ENCODE measurements at regions of chr7 and their contacts with region 1.

Region 1: GRCh38 chr7:108525985-108526767 is at the start of gene PNPLA8:
- DNase-seq: peak; percentile 100
- ATAC-seq: peak; percentile 91
- H3K4me3 Mint-ChIP-seq: peak within 1 kb of the TSS; percentile 95
- H3K27ac Mint-ChIP-seq: peak within 1 kb of the TSS; percentile 98
- H3K4me1 Mint-ChIP-seq: peaks cover 20% of the 10 kb centered on the region
- H3K27me3 Mint-ChIP-seq: peaks cover 3% of the 10 kb centered on the region
- total RNA-seq, gene PNPLA8: 13.0 to 13.6 TPM

Region 2: DNA sequence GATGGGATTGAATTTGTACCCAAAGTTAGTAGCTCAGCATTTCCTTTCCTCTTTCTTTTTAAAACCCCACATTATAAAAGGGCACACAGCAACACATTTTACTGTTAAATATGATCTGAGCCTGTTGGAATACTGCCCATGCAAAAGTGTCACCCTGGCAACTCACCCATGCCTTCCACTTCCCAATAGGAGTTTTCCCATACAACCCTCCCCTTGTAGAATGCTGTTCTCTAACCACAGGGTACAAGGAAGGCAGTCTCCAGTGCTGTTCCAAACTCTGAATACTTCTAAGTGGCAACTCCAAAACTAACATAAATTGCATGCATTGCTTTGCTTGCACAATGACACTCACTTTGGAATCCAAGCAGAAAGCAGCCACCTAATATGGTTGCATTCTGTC is 130.8 kb before region 1 on chr7:
- CTCF ChIA-PET with region 1: no interaction called
- POLR2A ChIA-PET with region 1: no interaction called
- DNase-seq: no peak
- ATAC-seq: no peak
- H3K4me3 Mint-ChIP-seq: no peak overlapping the region
- H3K27ac Mint-ChIP-seq: no peak overlapping the region
- H3K4me1 Mint-ChIP-seq: no peaks in the 10 kb centered on the region
- H3K27me3 Mint-ChIP-seq: no peaks in the 10 kb centered on the region

Region 3: DNA sequence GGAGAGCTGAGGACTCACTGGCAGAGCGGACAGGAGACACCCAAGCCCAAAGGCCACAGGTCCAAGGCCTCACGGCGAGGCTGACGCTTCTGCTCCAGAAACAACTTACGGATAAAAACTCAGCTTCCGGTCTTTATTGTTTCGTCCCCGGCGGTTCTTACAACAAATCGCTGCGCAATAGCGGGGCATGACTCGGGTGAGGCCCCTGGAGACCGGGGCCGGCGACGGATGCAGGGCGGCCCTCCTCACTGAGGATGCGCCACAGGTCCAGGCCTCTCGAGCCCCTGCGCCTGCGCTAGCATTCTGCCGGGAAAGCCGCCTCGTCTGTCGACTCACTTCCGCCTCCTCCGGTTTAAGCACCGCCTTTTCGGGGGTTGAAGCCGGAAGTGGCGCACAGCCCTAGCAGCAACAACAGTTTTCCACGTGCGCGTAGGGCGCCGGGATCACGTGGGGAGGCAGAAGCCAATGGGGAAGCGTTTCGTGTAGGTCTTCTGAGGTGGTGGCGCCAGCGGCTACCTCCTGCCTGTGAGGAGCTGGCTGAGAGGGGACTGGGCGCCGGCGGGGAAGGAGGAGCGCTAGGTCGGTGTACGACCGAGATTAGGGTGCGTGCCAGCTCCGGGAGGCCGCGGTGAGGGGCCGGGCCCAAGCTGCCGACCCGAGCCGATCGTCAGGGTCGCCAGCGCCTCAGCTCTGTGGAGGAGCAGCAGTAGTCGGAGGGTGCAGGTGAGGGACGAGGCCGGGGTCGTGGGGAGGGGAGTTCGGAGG is 43.4 kb after region 1 on chr7 and contains the starts of genes DNAJB9 and THAP5:
- CTCF ChIA-PET with region 1: interaction called, 6 read pairs
- POLR2A ChIA-PET with region 1: interaction called, 55 read pairs
- DNase-seq: peak; percentile 99
- ATAC-seq: peak; percentile 91
- H3K4me3 Mint-ChIP-seq: peak within 1 kb of the TSS; percentile 96
- H3K27ac Mint-ChIP-seq: peak within 1 kb of the TSS; percentile 100
- H3K4me1 Mint-ChIP-seq: peaks cover 37% of the 10 kb centered on the region
- H3K27me3 Mint-ChIP-seq: no peaks in the 10 kb centered on the region
- total RNA-seq, gene DNAJB9: 9.4 to 9.6 TPM
- total RNA-seq, gene THAP5: 26.7 to 29.4 TPM